ENCODE measurements at regions of chr5 and their contacts with region 1.

Region 1: GRCh38 chr5:136062366-136063274 is 33.8 kb downstream of the TGFBI start:
- DNase-seq: peak in 1 of 2 experiments; percentile 71
- ATAC-seq: no peak
- H3K4me3 ChIP-seq: no peak overlapping the region
- H3K27ac ChIP-seq: peak overlapping the region; percentile 86 to 93
- H3K4me1 ChIP-seq: peaks cover 97% of the 10 kb centered on the region
- CTCF ChIP-seq: peak; percentile 53
- EP300 ChIP-seq: no peak
- POLR2A ChIP-seq: no peak
- RAD21 ChIP-seq: peak; percentile 77 to 82

Region 2: DNA sequence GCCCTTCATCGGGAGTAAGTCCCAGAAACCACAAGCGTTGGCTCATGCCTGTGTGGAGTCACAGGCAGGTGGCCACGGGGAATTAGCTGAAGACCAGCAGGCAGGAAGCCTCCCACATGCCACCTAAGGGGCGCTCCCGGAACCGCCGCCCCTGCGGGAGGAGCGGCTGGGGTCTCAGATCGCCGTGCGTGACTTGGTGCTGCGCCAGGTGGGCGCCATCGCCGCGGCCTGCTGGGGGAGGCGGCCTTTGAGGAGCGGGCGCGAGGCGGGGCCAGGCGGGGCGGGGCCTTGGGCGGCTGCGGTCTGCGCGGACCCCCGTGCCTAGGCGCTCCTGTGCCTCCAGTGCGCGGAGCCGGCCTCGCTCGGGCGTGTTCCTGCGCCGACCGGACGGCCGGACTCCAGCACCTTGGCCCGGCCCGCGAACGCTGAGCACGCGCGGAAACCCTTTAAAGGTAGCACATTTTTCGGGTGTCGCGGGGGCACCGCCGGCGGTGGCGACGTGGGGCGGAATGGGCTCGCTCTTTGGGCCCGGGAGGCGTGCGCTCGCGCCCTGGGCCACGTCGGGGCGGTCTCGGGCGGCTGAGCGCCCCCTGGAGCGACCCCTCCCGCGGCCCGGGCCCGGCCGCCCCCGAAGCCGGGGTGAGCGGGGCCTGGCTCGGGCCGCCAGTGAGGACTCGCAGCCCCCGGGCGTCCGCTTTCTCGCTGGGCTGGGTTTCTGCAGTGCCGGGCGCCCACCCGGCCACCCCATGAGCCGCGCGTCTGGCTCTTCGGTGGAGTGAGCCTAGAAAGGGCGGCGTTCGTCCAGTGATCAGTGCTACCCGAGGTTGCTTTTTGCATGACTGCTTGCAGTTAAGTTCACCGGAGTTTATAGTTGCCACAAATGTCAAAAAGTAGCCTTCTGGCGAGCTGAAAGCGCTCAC is 132.3 kb before region 1 on chr5:
- CTCF ChIA-PET with region 1: interaction called, 11 read pairs
- POLR2A ChIA-PET with region 1: no interaction called
- DNase-seq: peak; percentile 35 to 48
- ATAC-seq: peak; percentile 92 to 96
- H3K4me3 ChIP-seq: peak overlapping the region; percentile 67
- H3K27ac ChIP-seq: peak overlapping the region; percentile 79 to 93
- H3K4me1 ChIP-seq: peaks cover 6% of the 10 kb centered on the region; the same call in 2 of the 3 replicates
- CTCF ChIP-seq: no peak; the same call in 2 of the 3 replicates
- EP300 ChIP-seq: no peak
- POLR2A ChIP-seq: peak; percentile 13; the same call in 1 of the 2 replicates
- RAD21 ChIP-seq: 0 out of 5 replicates have a peak, but pooled peaks of 1 of the 2 experiments have one; percentile 17

Region 3: GRCh38 chr5:135966165-135966564 is 96.5 kb before region 1 on chr5:
- CTCF ChIA-PET with region 1: no interaction called
- POLR2A ChIA-PET with region 1: no interaction called
- DNase-seq: no peak
- ATAC-seq: no peak
- H3K4me3 ChIP-seq: no peak overlapping the region
- H3K27ac ChIP-seq: peak overlapping the region in 1 of 2 experiments; percentile 1; a peak in 3 of 6 replicates
- H3K4me1 ChIP-seq: peaks cover 6% of the 10 kb centered on the region; the same call in 1 of the 3 replicates
- CTCF ChIP-seq: no peak
- EP300 ChIP-seq: no peak
- POLR2A ChIP-seq: no peak
- RAD21 ChIP-seq: no peak

Region 4: GRCh38 chr5:136006761-136007251 is 55.8 kb before region 1 on chr5:
- CTCF ChIA-PET with region 1: interaction called, 15 read pairs
- POLR2A ChIA-PET with region 1: interaction called, 3 read pairs
- DNase-seq: peak; percentile 81 to 93
- ATAC-seq: peak; percentile 86 to 92
- H3K4me3 ChIP-seq: no peak overlapping the region; the same call in 2 of the 3 replicates
- H3K27ac ChIP-seq: peak overlapping the region; percentile 92 to 96
- H3K4me1 ChIP-seq: peaks cover 60% of the 10 kb centered on the region
- CTCF ChIP-seq: no peak
- EP300 ChIP-seq: peak; percentile 72 to 86; a peak in 2 of 5 replicates
- POLR2A ChIP-seq: no peak
- RAD21 ChIP-seq: peak in 1 of 2 experiments; percentile 43; a peak in 3 of 5 replicates

Region 5: GRCh38 chr5:136020383-136021015 is 42.1 kb before region 1 on chr5:
- CTCF ChIA-PET with region 1: interaction called, 10 read pairs
- POLR2A ChIA-PET with region 1: interaction called, 6 read pairs
- DNase-seq: peak; percentile 89 to 95
- ATAC-seq: peak; percentile 79 to 83
- H3K4me3 ChIP-seq: no peak overlapping the region
- H3K27ac ChIP-seq: peak overlapping the region; percentile 96 to 97
- H3K4me1 ChIP-seq: peaks cover 63% of the 10 kb centered on the region
- CTCF ChIP-seq: no peak
- EP300 ChIP-seq: peak; percentile 72 to 93; a peak in 4 of 5 replicates
- POLR2A ChIP-seq: no peak
- RAD21 ChIP-seq: peak in 1 of 2 experiments; percentile 54; a peak in 2 of 5 replicates

Region 6: GRCh38 chr5:136037001-136037705 is 25.5 kb before region 1 on chr5:
- CTCF ChIA-PET with region 1: interaction called, 79 read pairs
- POLR2A ChIA-PET with region 1: interaction called, 13 read pairs
- DNase-seq: no peak
- ATAC-seq: no peak
- H3K4me3 ChIP-seq: no peak overlapping the region
- H3K27ac ChIP-seq: peak overlapping the region; percentile 5 to 77; a peak in 4 of 6 replicates
- H3K4me1 ChIP-seq: peaks cover 99% of the 10 kb centered on the region
- CTCF ChIP-seq: no peak
- EP300 ChIP-seq: no peak
- POLR2A ChIP-seq: no peak
- RAD21 ChIP-seq: no peak

Region 7: GRCh38 chr5:136080483-136081216 is 18.0 kb after region 1 on chr5:
- CTCF ChIA-PET with region 1: interaction called, 21 read pairs
- POLR2A ChIA-PET with region 1: no interaction called
- DNase-seq: peak; percentile 43 to 85
- ATAC-seq: peak; percentile 62 to 63
- H3K4me3 ChIP-seq: peak overlapping the region; percentile 30
- H3K27ac ChIP-seq: peak overlapping the region; percentile 80 to 89
- H3K4me1 ChIP-seq: peaks cover 27% of the 10 kb centered on the region
- CTCF ChIP-seq: no peak
- EP300 ChIP-seq: no peak
- POLR2A ChIP-seq: peak; percentile 45
- RAD21 ChIP-seq: no peak

Region 8: DNA sequence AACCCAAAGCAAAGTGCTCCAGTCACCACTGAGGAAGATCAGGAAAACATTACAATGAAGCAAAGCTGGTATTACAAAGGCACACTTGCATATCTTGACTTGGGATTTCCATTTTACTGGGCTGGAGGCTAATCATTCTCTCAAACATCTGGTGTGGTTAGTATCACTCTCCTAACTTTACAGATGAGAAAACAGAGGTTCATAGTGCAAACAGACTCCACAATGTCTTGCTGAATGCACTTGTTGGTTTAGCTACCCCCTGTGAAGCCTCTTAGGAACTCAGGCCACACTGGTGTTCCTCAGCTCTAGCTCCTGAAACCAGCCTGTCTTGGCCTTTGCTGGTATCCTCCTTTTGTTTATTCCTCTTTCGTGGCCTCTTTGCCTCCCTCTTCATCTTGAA is 40.5 kb after region 1 on chr5:
- CTCF ChIA-PET with region 1: no interaction called
- POLR2A ChIA-PET with region 1: no interaction called
- DNase-seq: no peak
- ATAC-seq: no peak
- H3K4me3 ChIP-seq: no peak overlapping the region
- H3K27ac ChIP-seq: no peak overlapping the region
- H3K4me1 ChIP-seq: no peaks in the 10 kb centered on the region
- CTCF ChIP-seq: no peak
- EP300 ChIP-seq: no peak
- POLR2A ChIP-seq: no peak
- RAD21 ChIP-seq: no peak

Measured in A549 (cell line).